GM12878 (cell line): ENCODE measurements at regions of chr4 and their contacts with region 1.

Region 1: DNA sequence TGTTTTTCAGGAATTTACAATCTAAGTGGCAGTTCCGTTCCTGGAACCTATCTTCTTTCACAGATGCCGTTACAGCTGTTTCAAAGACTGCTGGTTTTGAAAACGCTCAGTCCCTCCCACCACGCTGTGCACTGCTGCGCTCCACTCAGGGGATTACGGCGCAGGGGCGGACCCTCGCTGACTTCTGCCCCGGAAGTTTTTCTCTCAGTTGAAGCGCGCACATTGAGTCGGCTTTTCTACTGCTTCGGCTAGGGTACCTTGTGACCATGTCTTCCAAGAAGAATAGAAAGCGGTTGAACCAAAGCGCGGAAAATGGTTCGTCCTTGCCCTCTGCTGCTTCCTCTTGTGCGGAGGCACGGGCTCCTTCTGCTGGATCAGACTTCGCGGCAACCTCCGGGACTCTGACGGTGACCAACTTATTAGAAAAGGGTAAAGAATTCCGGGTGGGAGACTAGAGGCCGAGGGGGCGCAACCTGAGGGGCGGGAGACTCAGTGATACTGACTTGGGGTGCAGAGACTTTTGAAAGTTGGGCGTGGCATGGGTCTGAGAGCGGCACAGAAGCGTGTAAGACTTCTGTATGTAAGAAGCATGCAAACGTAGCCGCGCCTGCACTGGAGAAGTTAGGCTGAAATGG is 597 bp upstream of the NUDT6 start:
- DNase-seq: peak; percentile 53
- ATAC-seq: peak; percentile 98
- H3K4me3 ChIP-seq: peak overlapping the region; percentile 95
- H3K27ac ChIP-seq: peak overlapping the region; percentile 64
- H3K4me1 ChIP-seq: peaks cover 6% of the 10 kb centered on the region
- H3K27me3 ChIP-seq: no peaks in the 10 kb centered on the region
- CTCF ChIP-seq: no peak
- EP300 ChIP-seq: peak in 1 of 2 experiments; percentile 32; a peak in 1 of 4 replicates
- POLR2A ChIP-seq: peak; percentile 41; the same call in 1 of the 2 replicates
- RAD21 ChIP-seq: no peak

Region 2: GRCh38 chr4:122749704-122750454 is 173.1 kb before region 1 on chr4:
- CTCF ChIA-PET with region 1: interaction called, 4 read pairs
- POLR2A ChIA-PET with region 1: no interaction called
- RAD21 ChIA-PET with region 1: no interaction called
- SMC1A ChIA-PET with region 1: interaction called, 5 read pairs
- in situ Hi-C with region 1: loop called (anchors 5 kb)
- intact Hi-C with region 1: no loop called
- DNase-seq: no peak
- ATAC-seq: no peak
- H3K4me3 ChIP-seq: no peak overlapping the region
- H3K27ac ChIP-seq: no peak overlapping the region
- H3K4me1 ChIP-seq: no peaks in the 10 kb centered on the region
- H3K27me3 ChIP-seq: no peaks in the 10 kb centered on the region
- CTCF ChIP-seq: no peak
- EP300 ChIP-seq: no peak
- POLR2A ChIP-seq: no peak
- RAD21 ChIP-seq: no peak

Region 3: GRCh38 chr4:122758033-122758432 is 165.0 kb before region 1 on chr4:
- CTCF ChIA-PET with region 1: interaction called, 37 read pairs
- POLR2A ChIA-PET with region 1: no interaction called
- RAD21 ChIA-PET with region 1: interaction called, 7 read pairs
- SMC1A ChIA-PET with region 1: interaction called, 35 read pairs
- in situ Hi-C with region 1: loop called (anchors 5 kb)
- intact Hi-C with region 1: loop called (anchors 2 kb)
- DNase-seq: no peak
- ATAC-seq: peak; percentile 56
- H3K4me3 ChIP-seq: no peak overlapping the region
- H3K27ac ChIP-seq: no peak overlapping the region
- H3K4me1 ChIP-seq: peaks cover 6% of the 10 kb centered on the region; the same call in 1 of the 2 replicates
- H3K27me3 ChIP-seq: no peaks in the 10 kb centered on the region
- CTCF ChIP-seq: peak; percentile 43 to 60 (median 55); a peak in 5 of 6 replicates
- EP300 ChIP-seq: no peak
- POLR2A ChIP-seq: no peak
- RAD21 ChIP-seq: peak; percentile 76

Region 4: GRCh38 chr4:122827879-122828601 is 95.0 kb before region 1 on chr4:
- CTCF ChIA-PET with region 1: interaction called, 3 read pairs
- POLR2A ChIA-PET with region 1: no interaction called
- RAD21 ChIA-PET with region 1: no interaction called
- SMC1A ChIA-PET with region 1: interaction called, 4 read pairs
- in situ Hi-C with region 1: no loop called
- intact Hi-C with region 1: loop called (anchors 5 kb)
- DNase-seq: peak; percentile 80
- ATAC-seq: peak; percentile 93
- H3K4me3 ChIP-seq: peak overlapping the region; percentile 67
- H3K27ac ChIP-seq: peak overlapping the region; percentile 47
- H3K4me1 ChIP-seq: peaks cover 3% of the 10 kb centered on the region; the same call in 1 of the 2 replicates
- H3K27me3 ChIP-seq: no peaks in the 10 kb centered on the region; a peak in 1 of 4 replicates
- CTCF ChIP-seq: peak in 2 of 3 experiments; percentile 8 to 24; a peak in 1 of 6 replicates
- EP300 ChIP-seq: peak in 1 of 2 experiments; percentile 55; a peak in 1 of 4 replicates
- POLR2A ChIP-seq: no peak
- RAD21 ChIP-seq: no peak